Tibial artery (tissue), 4 donors: ENCODE measurements at regions of chr18 and their contacts with region 1.

Region 1: DNA sequence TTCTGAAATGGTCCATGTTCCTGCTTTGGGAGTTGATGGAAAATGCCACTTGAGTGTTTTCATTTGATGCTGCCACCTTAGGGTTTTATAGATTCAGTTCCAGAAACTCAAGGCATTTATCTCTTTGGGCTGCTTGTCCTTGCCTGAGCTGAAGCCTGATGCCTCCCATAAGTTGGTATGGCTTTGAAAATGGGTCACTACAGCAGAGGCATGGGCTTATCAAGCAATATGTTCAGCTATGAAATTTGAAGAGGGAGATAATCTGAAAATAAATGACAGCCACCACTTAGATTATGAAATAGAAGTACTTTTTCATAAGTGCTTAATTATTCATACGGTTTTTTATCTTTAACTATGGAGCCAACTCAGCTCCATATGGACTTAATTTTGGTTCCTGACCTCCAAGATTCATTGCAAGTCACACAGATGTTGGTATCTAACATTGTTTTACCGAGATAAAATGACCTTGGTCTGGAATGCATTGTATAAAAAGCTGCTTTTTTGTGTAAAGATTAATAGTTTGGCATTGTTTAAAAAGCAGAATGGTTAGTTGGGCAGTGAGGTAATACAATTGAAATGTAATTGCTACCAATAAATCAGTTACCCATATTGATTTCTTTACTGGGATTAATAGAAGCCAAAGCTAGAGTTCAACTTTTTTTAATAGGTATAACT is 4.5 kb downstream of the SLC14A1 start:
- DNase-seq: no peak
- H3K4me3 ChIP-seq: no peak overlapping the region
- H3K27ac ChIP-seq: no peak overlapping the region
- H3K4me1 ChIP-seq: peaks cover 0 to 43% (median 10%) of the 10 kb centered on the region in 4 donors
- H3K27me3 ChIP-seq: no peaks in the 10 kb centered on the region
- CTCF ChIP-seq: no peak

Region 2: DNA sequence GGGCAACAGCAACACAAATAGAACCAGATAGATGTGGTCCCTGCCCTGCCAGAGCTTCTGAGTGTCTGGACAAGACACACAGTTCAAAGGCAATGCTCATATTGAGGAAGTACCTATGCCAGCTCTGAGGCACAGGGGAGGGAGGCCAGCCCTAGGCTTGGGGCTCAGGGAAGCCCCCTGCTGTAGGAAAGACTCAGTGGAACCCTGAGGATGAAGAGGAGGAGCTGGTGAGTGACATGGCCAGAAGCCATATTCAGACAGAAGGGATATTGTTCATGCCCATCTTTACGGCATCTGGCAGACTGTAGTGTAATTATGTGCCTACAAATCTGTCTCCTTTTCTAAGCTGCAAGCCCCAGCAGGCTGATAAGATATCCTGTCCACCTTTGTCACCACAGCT is 105.8 kb after region 1 on chr18:
- intact Hi-C with region 1: loop called (anchors 2 kb)
- DNase-seq: no peak
- H3K4me3 ChIP-seq: no peak overlapping the region
- H3K27ac ChIP-seq: no peak overlapping the region
- H3K4me1 ChIP-seq: peaks cover 0 to 31% (median 21%) of the 10 kb centered on the region in 4 donors
- H3K27me3 ChIP-seq: no peaks in the 10 kb centered on the region
- CTCF ChIP-seq: no peak